CD8-positive, alpha-beta T cell (primary cell): ENCODE measurements at regions of chr11 and their contacts with region 1.

Region 1: GRCh38 chr11:66288671-66289547 is at the start of gene YIF1A:
- DNase-seq: peak; percentile 96 to 99 (median 98)
- ATAC-seq: peak; percentile 90
- H3K4me3 ChIP-seq: peak within 1 kb of the TSS; percentile 67 to 80
- H3K4me3 Mint-ChIP-seq: peak within 1 kb of the TSS; percentile 82
- H3K27ac ChIP-seq: peak within 1 kb of the TSS; percentile 75 to 81
- H3K27ac Mint-ChIP-seq: peak within 1 kb of the TSS; percentile 85
- H3K4me1 ChIP-seq: peaks cover 27% of the 10 kb centered on the region
- H3K4me1 Mint-ChIP-seq: peaks cover 42% of the 10 kb centered on the region
- H3K27me3 ChIP-seq: peaks cover 16 to 17% of the 10 kb centered on the region in 2 experiments
- H3K27me3 Mint-ChIP-seq: peaks cover 13% of the 10 kb centered on the region
- CTCF ChIP-seq: no peak
- total RNA-seq, gene YIF1A: 16.8 to 17.1 TPM

Region 2: DNA sequence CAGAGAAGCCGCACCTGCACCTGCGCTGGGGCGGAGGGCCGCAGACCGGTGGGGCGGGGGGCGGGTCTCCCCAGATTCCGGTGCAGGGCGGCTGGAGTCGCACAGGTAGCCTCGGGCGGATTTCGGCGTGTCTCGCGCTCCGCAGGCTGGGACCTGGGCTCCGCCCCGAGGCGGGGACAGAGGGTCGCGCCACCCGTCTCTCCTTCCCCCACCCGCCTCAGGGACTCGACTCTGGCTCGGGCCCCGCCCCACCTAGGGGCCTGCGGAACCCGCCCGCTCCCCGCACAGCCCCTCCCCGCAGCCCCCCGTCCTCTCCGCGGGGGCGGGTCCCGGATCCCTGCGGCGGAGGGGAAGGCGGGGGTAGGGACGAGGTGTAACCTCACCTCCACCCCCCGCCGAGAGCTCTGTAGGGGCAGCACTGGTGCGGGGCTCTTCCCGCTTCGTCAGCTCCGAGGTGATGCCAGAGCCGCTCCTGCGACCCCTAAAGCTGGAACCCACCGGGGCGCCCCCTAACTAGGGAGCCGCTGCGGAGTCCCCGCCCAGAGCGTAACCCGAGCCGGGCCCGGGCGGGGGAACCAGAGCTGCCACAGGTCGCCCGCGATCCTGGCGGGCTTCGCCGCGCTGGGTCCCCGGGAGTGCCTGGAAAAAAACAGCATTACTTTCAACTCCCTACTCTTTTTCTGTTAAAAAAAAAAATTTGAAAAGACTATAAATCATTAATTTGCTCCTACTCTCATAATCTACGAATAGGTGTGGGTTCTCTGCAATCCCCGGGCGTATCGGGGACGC is 82.9 kb after region 1 on chr11 and contains the start of gene SLC29A2:
- CTCF ChIA-PET with region 1: no interaction called
- POLR2A ChIA-PET with region 1: no interaction called
- intact Hi-C with region 1: loop called in 1 of 2 experiments (anchors 1 kb)
- DNase-seq: peak; percentile 49 to 89 (median 80)
- ATAC-seq: peak; percentile 86
- H3K4me3 ChIP-seq: peak within 1 kb of the TSS; percentile 71 to 77
- H3K4me3 Mint-ChIP-seq: peak within 1 kb of the TSS; percentile 87
- H3K27ac ChIP-seq: peak within 1 kb of the TSS; percentile 63 to 68
- H3K27ac Mint-ChIP-seq: peak within 1 kb of the TSS; percentile 88
- H3K4me1 ChIP-seq: peaks cover 10% of the 10 kb centered on the region
- H3K4me1 Mint-ChIP-seq: peaks cover 12% of the 10 kb centered on the region
- H3K27me3 ChIP-seq: no peaks in the 10 kb centered on the region
- H3K27me3 Mint-ChIP-seq: no peaks in the 10 kb centered on the region
- CTCF ChIP-seq: no peak
- total RNA-seq, gene SLC29A2: 5.6 to 6.0 TPM